Transverse colon (tissue), 4 donors: ENCODE measurements at regions of chr14 and their contacts with region 1.

Region 1: DNA sequence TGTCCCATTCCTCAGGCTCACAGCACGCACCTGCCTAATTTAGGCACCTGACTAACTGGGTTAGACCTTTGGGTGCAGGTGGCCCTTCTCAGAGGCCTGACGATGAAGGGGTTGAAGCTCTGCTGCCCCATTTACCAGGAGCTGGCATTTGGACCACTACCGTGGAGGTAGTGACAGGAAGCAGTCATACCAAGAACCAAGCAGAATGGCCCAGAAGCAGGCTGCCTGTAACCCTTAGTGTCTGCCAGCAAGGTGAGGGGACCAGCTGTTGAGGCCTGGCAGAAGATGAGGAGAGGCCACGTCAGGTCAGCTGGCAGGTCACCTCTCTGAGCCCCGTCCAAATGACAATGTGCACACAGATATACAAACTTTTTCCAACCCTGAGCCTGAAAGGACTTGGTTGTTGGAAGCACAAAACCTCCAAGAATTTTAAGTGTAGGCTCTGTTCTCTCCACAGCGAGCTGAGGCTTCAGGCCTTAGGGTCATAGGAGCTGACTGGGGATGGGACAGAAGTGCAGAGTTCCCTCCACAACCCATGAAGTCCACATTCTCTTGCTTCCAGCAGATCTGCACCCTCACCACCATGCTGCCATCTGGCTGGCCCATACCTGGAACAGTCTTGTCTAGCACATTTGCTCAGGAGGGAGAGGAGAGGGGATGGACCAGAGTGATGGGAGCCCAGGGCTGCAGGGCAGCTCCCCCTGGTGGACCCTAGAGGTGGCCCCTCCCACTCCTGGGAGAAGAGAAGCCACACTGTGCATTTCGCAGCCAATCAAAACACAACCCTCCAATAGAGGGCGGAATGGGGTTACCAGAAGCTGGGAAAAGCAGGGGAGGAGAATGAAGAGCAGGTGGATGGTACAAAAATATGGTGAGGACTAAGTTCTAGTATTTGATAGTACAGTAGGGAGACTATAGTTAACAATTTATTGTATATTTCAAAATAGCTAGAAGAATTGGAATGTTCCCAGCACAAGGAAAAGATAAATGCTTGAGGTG is 23.3 kb downstream of the VASH1 start:
- DNase-seq: peak; percentile 64
- H3K4me3 ChIP-seq: no peak overlapping the region
- H3K27ac ChIP-seq: no peak overlapping the region
- H3K4me1 ChIP-seq: peaks cover 0 to 8% (median 0%) of the 10 kb centered on the region in 4 donors
- H3K27me3 ChIP-seq: no peaks in the 10 kb centered on the region
- CTCF ChIP-seq: peak; percentile 58 to 70 (median 61)
- EP300 ChIP-seq: no peak
- POLR2A ChIP-seq: no peak

Region 2: GRCh38 chr14:76710056-76711010 is 74.2 kb before region 1 on chr14:
- in situ Hi-C with region 1: loop called in 2 of 4 experiments (anchors 10 kb)
- intact Hi-C with region 1: loop called (anchors 10 kb)
- DNase-seq: no peak
- H3K4me3 ChIP-seq: no peak overlapping the region
- H3K27ac ChIP-seq: no peak overlapping the region
- H3K4me1 ChIP-seq: no peaks in the 10 kb centered on the region
- H3K27me3 ChIP-seq: peaks cover 3% of the 10 kb centered on the region
- CTCF ChIP-seq: peak; percentile 61 to 77 (median 76)
- EP300 ChIP-seq: no peak
- POLR2A ChIP-seq: no peak